ENCODE measurements at regions of chr17 and their contacts with region 1.

Region 1: DNA sequence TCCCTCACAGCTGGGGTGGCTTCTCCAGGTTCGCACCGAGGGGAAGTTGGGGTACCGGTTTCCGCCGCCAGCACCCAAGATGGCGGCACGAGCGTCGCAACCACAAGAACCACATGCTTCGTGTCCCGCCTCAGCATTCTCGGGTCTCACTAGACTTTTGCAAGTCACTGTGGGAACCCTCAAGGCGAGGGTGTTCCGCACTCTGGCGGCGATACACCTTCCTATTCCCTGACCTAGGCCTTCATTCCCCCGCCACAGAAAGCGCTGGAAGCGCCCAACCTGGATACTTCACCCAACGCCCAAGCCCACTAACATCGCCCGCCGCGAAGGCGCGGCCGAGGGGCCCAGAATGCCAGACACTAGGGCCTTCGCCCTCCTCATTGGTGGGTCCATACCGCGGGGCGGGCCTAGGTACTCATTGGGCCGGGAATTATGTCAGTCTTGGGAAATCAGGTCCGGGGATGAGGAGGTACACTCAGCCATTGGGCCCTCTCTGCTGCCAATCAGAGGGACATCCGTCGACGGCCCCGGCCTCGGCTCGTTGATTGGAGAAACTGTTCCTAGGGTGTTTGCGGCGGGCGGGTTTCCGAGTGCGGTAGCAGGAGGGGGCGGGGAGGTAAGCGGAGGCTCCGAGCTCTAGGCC is at the start of gene NFE2L1:
- DNase-seq: peak; percentile 99
- H3K4me3 Mint-ChIP-seq: peak within 1 kb of the TSS; percentile 97
- H3K27ac Mint-ChIP-seq: peak within 1 kb of the TSS; percentile 96
- H3K4me1 Mint-ChIP-seq: peaks cover 64% of the 10 kb centered on the region
- H3K27me3 Mint-ChIP-seq: peaks cover 14% of the 10 kb centered on the region

Region 2: GRCh38 chr17:48037036-48037837 is 10.6 kb before region 1 on chr17 and contains the start of gene COPZ2:
- CTCF ChIA-PET with region 1: interaction called, 26 read pairs
- DNase-seq: peak; percentile 77
- H3K4me3 Mint-ChIP-seq: peak within 1 kb of the TSS; percentile 77
- H3K27ac Mint-ChIP-seq: no peak within 1 kb of the TSS
- H3K4me1 Mint-ChIP-seq: peaks cover 21% of the 10 kb centered on the region
- H3K27me3 Mint-ChIP-seq: peaks cover 85% of the 10 kb centered on the region

Region 3: DNA sequence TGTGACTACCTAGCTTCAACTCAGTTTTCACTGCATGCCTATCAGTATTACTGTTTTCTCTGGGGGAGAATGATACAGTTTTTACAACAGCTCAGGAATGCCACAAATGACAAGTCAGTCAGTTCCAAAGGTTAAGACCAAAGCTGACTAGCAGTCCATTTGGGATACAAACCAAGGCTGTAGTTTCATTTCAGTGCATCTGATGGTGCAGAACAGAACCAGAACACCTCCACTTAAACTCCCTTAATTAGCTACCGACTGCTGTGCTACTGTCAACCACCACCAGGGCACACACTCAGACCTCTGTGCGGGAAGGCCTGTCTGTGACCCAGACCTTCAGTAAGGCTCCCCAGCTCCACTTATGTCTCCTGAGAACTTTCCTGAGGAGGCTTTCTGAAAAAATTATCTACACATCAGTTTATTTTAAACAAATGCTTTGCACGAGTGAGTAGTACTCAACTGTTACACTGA is 20.7 kb after region 1 on chr17:
- CTCF ChIA-PET with region 1: interaction called, 10 read pairs
- DNase-seq: peak; percentile 32
- H3K4me3 Mint-ChIP-seq: no peak overlapping the region
- H3K27ac Mint-ChIP-seq: no peak overlapping the region
- H3K4me1 Mint-ChIP-seq: no peaks in the 10 kb centered on the region
- H3K27me3 Mint-ChIP-seq: no peaks in the 10 kb centered on the region

Measured in activated naive CD4-positive, alpha-beta T cell treated with anti-CD3 and anti-CD28 coated beads, Interleukin-2, amount 10 ng/mL, durations not matched to agents 7 days and 5 days (primary cell).